ENCODE measurements at regions of chr6 and their contacts with region 1.

Region 1: DNA sequence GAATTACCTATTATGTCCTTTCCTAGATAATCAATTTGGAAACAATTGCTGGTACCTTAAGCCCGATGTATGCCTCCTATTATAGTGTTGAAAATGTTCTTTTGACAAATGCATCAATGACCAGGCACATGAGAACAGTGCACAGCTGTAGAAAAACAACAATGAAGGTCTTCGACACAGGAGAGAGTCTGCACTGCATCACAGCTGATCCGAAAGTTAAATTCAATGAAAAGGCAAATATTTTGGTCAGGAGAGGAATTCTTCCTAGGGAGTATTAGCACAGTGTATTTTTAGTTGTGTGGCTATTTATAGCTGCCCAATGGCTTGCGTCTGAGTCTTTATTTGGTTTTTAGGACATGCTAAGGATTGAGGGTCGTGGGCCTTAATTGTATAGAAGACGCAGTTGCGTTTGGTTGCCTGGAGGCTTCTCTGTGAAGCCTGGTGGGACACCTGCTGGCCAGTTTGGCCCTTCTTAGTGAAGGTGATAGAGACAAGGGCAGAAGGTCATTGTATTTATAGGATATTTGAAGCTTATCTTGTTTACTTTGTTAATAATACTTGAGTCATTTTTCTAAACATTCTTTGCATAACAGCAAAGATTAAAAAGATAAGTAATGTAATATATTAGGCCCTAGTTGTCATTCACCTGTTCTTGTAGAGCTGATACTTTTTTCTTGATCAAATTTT is 72.3 kb downstream of the CDYL start:
- DNase-seq: peak; percentile 70 to 71
- H3K4me3 ChIP-seq: no peak overlapping the region
- H3K4me3 Mint-ChIP-seq: no peak overlapping the region
- H3K27ac Mint-ChIP-seq: no peak overlapping the region
- H3K4me1 ChIP-seq: peaks cover 28% of the 10 kb centered on the region
- H3K4me1 Mint-ChIP-seq: peaks cover 33% of the 10 kb centered on the region
- H3K27me3 ChIP-seq: no peaks in the 10 kb centered on the region
- H3K27me3 Mint-ChIP-seq: no peaks in the 10 kb centered on the region
- CTCF ChIP-seq: peak; percentile 74 to 78

Region 2: GRCh38 chr6:4313044-4313686 is 535.4 kb before region 1 on chr6:
- CTCF ChIA-PET with region 1: no interaction called
- POLR2A ChIA-PET with region 1: no interaction called
- intact Hi-C with region 1: loop called (anchors 1 kb)
- DNase-seq: no peak
- H3K4me3 ChIP-seq: no peak overlapping the region
- H3K4me3 Mint-ChIP-seq: no peak overlapping the region
- H3K27ac Mint-ChIP-seq: no peak overlapping the region
- H3K4me1 ChIP-seq: no peaks in the 10 kb centered on the region
- H3K4me1 Mint-ChIP-seq: no peaks in the 10 kb centered on the region
- H3K27me3 ChIP-seq: no peaks in the 10 kb centered on the region
- H3K27me3 Mint-ChIP-seq: peaks cover 3% of the 10 kb centered on the region
- CTCF ChIP-seq: no peak

Region 3: GRCh38 chr6:4775584-4776494 is 72.7 kb before region 1 on chr6 and contains the start of gene CDYL:
- CTCF ChIA-PET with region 1: interaction called, 7 read pairs
- POLR2A ChIA-PET with region 1: interaction called, 5 read pairs
- intact Hi-C with region 1: loop called (anchors 2 kb)
- DNase-seq: peak; percentile 85 to 93
- H3K4me3 ChIP-seq: peak within 1 kb of the TSS; percentile 76
- H3K4me3 Mint-ChIP-seq: peak within 1 kb of the TSS; percentile 93
- H3K27ac Mint-ChIP-seq: peak within 1 kb of the TSS; percentile 89
- H3K4me1 ChIP-seq: no peaks in the 10 kb centered on the region
- H3K4me1 Mint-ChIP-seq: peaks cover 8% of the 10 kb centered on the region
- H3K27me3 ChIP-seq: no peaks in the 10 kb centered on the region
- H3K27me3 Mint-ChIP-seq: no peaks in the 10 kb centered on the region
- CTCF ChIP-seq: peak in 1 of 2 experiments; percentile 16
- total RNA-seq, gene CDYL: 41.6 and 51.2 TPM in 2 replicates

Measured in Caco-2 (cell line).